ENCODE measurements at regions of chr4 and their contacts with region 1.

Region 1: DNA sequence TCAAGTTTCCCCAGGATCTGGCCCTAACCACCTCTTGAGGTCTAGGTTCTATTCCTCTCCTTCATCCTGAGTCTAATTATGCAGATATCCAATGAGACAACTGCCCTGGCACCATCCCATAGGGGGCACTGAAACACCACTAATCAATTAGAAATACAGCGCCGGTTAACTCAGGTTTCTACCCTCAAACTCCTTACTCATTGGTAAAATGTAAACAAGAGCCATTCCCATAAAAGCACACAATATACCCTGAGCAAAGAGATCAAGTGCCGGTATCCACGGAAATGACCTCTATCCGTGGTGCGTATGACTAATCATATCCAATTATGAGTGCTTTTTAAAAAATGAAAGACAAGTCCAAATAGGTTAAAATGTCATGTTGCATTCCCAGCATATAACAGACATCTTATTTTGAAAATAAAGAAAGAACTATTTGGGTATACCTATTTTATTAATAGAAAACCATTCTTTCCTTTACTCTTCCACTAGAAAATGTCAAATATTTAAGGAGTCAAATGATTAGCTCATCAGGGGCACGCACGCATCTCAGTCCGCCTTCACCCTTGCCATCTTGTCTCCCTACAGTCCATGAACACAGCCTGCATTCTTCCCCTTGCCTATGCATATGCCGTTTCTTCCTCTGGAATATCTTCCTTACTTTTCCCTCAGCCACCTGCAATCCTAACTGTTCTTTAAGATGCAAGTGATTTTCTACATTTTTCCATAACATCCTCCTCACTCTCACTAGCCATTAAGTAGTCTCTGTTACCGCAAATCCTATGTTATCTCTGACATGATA is 141.1 kb downstream of the MAML3 start:
- DNase-seq: peak; percentile 53
- ATAC-seq: peak; percentile 97

Region 2: GRCh38 chr4:140326395-140326993 is 313.6 kb after region 1 on chr4:
- intact Hi-C with region 1: loop called (anchors 10 kb)
- DNase-seq: no peak
- ATAC-seq: peak; percentile 79

Region 3: GRCh38 chr4:140497747-140498636 is 485.1 kb after region 1 on chr4 and contains the start of gene MGAT4D:
- intact Hi-C with region 1: no loop called
- DNase-seq: no peak
- ATAC-seq: peak; percentile 52
- total RNA-seq, gene MGAT4D: not detected